Prostate gland (tissue), 2 donors: ENCODE measurements at regions of chr15 and their contacts with region 1.

Region 1: DNA sequence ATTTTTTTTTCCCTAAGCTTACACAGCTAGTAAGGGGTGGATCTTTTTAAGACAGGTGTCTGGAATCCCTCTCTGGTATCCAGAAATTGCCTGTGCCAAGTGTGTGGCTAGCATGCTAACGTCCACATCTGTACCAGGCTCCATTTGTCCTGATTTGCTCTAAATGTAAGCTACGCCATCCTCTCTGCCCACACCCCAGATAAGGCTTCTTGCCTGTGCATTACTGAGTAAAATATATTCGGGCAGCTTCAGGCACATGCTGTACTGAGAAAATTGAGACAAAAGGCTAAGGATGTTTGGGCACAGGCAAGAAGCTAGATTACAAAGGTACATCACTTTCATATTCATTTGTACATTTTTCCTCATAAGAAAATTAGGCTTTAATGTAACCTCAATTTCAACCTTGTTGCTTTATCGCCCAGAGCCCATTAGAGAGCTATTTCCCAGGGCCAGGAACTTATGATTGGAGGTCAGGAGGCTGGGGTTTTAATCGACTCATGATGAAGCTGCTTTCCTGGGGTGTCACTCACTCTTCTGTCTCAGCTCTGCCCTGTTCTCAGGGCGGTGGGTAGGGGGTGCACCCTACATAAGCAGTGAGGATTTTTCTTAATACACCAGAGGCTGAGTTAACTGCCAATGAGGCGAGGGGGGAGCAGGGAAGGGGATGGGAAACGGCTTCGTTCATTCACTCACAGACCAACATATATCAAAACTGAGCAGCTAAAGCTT is 106.3 kb downstream of the RORA start:
- DNase-seq: no peak
- H3K4me3 ChIP-seq: no peak overlapping the region
- H3K27ac ChIP-seq: no peak overlapping the region
- H3K4me1 ChIP-seq: no peaks in the 10 kb centered on the region
- H3K27me3 ChIP-seq: no peaks in the 10 kb centered on the region
- CTCF ChIP-seq: no peak
- POLR2A ChIP-seq: no peak

Region 2: DNA sequence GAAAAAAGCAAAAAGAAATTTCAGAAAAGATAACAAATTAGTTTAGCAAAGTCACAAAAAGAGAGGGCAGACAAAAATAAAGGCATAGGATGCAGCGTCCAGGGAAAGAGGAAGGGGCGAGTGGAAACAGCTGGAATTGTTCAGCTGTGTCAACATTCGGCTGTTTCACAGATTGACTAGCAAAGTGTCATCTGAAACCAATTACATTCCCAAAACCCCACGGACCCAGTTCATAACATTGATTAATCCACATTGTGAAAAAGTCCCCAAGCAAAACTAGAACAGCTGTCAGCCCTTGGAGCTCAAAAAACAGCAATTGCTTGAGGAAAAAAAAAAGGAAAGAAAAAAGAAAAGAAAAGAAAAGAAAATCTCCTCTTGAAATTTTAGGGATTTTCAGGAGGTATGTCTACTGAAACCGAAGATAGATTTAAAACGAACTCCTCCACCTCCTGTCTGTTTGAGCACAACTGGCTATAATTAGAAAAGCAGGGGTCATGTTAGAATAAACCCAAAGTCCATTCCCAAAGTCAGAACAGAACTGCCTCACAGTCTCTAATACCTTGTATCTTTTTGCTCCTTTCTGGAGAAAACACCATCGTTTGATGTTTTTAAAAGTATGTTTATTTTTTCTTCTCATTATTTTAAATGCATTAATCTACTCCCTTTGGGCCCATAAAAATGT is 53.3 kb before region 1 on chr15:
- intact Hi-C with region 1: loop called (anchors 10 kb)
- DNase-seq: no peak
- H3K4me3 ChIP-seq: no peak overlapping the region
- H3K27ac ChIP-seq: no peak overlapping the region
- H3K4me1 ChIP-seq: no peaks in the 10 kb centered on the region
- H3K27me3 ChIP-seq: no peaks in the 10 kb centered on the region
- CTCF ChIP-seq: no peak
- POLR2A ChIP-seq: no peak

Region 3: GRCh38 chr15:61155741-61156700 is 33.2 kb after region 1 on chr15:
- intact Hi-C with region 1: no loop called
- DNase-seq: no peak
- H3K4me3 ChIP-seq: no peak overlapping the region
- H3K27ac ChIP-seq: no peak overlapping the region
- H3K4me1 ChIP-seq: no peaks in the 10 kb centered on the region
- H3K27me3 ChIP-seq: no peaks in the 10 kb centered on the region
- CTCF ChIP-seq: no peak
- POLR2A ChIP-seq: no peak